CD4-positive, alpha-beta T cell (primary cell): ENCODE measurements at regions of chr11 and their contacts with region 1.

Region 1: GRCh38 chr11:118791111-118791965 is at the start of gene DDX6:
- DNase-seq: peak; percentile 87 to 95 (median 90)
- ATAC-seq: peak; percentile 61
- H3K4me3 ChIP-seq: peak within 1 kb of the TSS; percentile 94
- H3K4me3 Mint-ChIP-seq: peak within 1 kb of the TSS; percentile 96
- H3K27ac ChIP-seq: peak within 1 kb of the TSS; percentile 94 to 98
- H3K27ac Mint-ChIP-seq: peak within 1 kb of the TSS; percentile 95
- H3K4me1 ChIP-seq: peaks cover 36% of the 10 kb centered on the region
- H3K4me1 Mint-ChIP-seq: peaks cover 26% of the 10 kb centered on the region
- H3K27me3 ChIP-seq: no peaks in the 10 kb centered on the region
- H3K27me3 Mint-ChIP-seq: no peaks in the 10 kb centered on the region
- CTCF ChIP-seq: no peak
- total RNA-seq, gene DDX6: 341 to 355 TPM

Region 2: GRCh38 chr11:118610804-118611795 is 180.2 kb before region 1 on chr11:
- CTCF ChIA-PET with region 1: no interaction called
- POLR2A ChIA-PET with region 1: interaction called, 10 read pairs
- intact Hi-C with region 1: no loop called
- DNase-seq: peak; percentile 74 to 93 (median 82)
- ATAC-seq: peak; percentile 35
- H3K4me3 ChIP-seq: peak overlapping the region; percentile 47
- H3K4me3 Mint-ChIP-seq: peak overlapping the region; percentile 85
- H3K27ac ChIP-seq: no peak overlapping the region
- H3K27ac Mint-ChIP-seq: peak overlapping the region; percentile 43
- H3K4me1 ChIP-seq: peaks cover 44% of the 10 kb centered on the region
- H3K4me1 Mint-ChIP-seq: peaks cover 24% of the 10 kb centered on the region
- H3K27me3 ChIP-seq: peaks cover 0 to 9% of the 10 kb centered on the region in 2 experiments
- H3K27me3 Mint-ChIP-seq: peaks cover 25% of the 10 kb centered on the region
- CTCF ChIP-seq: peak; percentile 96

Region 3: DNA sequence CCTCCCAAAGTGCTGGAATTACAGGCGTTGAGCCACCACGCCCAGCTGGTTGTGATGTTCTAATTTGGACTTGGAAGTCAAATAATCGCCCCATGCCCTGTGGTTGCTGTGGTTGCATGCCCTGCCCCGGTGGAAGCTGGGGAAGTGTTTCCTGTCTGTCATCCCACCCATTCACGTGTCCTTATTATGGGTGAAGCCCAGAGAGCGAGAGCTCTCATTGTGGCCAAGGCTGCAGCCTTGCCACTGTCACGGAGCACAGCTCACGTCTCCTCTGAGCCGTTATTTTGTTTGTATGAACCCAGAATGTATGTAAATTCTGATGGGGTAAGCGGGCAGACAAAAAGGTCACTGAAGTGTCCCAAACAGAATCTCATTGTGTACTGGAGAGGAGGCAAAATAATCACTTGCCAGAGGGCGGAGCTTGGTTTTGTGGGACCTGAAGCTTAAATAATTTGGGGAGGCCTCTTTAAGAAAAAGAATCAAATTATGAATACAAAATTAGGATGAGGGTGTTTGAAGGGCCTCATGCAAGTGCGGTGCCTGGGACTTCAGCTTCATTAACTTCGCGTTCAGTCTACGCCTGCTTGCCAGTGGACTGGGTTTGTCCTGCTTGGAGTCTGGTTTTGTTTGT is 86.1 kb before region 1 on chr11:
- CTCF ChIA-PET with region 1: interaction called, 3 read pairs
- POLR2A ChIA-PET with region 1: interaction called, 50 read pairs
- intact Hi-C with region 1: no loop called
- DNase-seq: peak in 13 of 14 experiments; percentile 26 to 87 (median 45)
- ATAC-seq: peak; percentile 74
- H3K4me3 ChIP-seq: no peak overlapping the region
- H3K4me3 Mint-ChIP-seq: peak overlapping the region; percentile 84
- H3K27ac ChIP-seq: peak overlapping the region; percentile 14 to 60
- H3K27ac Mint-ChIP-seq: peak overlapping the region; percentile 92
- H3K4me1 ChIP-seq: peaks cover 42% of the 10 kb centered on the region
- H3K4me1 Mint-ChIP-seq: peaks cover 42% of the 10 kb centered on the region
- H3K27me3 ChIP-seq: no peaks in the 10 kb centered on the region
- H3K27me3 Mint-ChIP-seq: no peaks in the 10 kb centered on the region
- CTCF ChIP-seq: no peak

Region 4: GRCh38 chr11:118834427-118835028 is 43.2 kb after region 1 on chr11:
- CTCF ChIA-PET with region 1: no interaction called
- POLR2A ChIA-PET with region 1: interaction called, 10 read pairs
- intact Hi-C with region 1: no loop called
- DNase-seq: peak in 3 of 14 experiments; percentile 23 to 42 (median 24)
- ATAC-seq: no peak
- H3K4me3 ChIP-seq: peak overlapping the region; percentile 3
- H3K4me3 Mint-ChIP-seq: peak overlapping the region; percentile 27
- H3K27ac ChIP-seq: no peak overlapping the region
- H3K27ac Mint-ChIP-seq: no peak overlapping the region
- H3K4me1 ChIP-seq: peaks cover 6% of the 10 kb centered on the region
- H3K4me1 Mint-ChIP-seq: peaks cover 12% of the 10 kb centered on the region
- H3K27me3 ChIP-seq: no peaks in the 10 kb centered on the region
- H3K27me3 Mint-ChIP-seq: no peaks in the 10 kb centered on the region
- CTCF ChIP-seq: no peak

Region 5: GRCh38 chr11:118895142-118896039 is 104.1 kb after region 1 on chr11:
- CTCF ChIA-PET with region 1: interaction called, 5 read pairs
- POLR2A ChIA-PET with region 1: interaction called, 212 read pairs
- intact Hi-C with region 1: loop called (anchors 2 kb)
- DNase-seq: peak; percentile 59 to 91 (median 76)
- ATAC-seq: peak; percentile 75
- H3K4me3 ChIP-seq: peak overlapping the region; percentile 18
- H3K4me3 Mint-ChIP-seq: peak overlapping the region; percentile 70
- H3K27ac ChIP-seq: peak overlapping the region; percentile 77 to 89
- H3K27ac Mint-ChIP-seq: peak overlapping the region; percentile 97
- H3K4me1 ChIP-seq: peaks cover 94% of the 10 kb centered on the region
- H3K4me1 Mint-ChIP-seq: peaks cover 76% of the 10 kb centered on the region
- H3K27me3 ChIP-seq: no peaks in the 10 kb centered on the region
- H3K27me3 Mint-ChIP-seq: no peaks in the 10 kb centered on the region
- CTCF ChIP-seq: no peak

Region 6: GRCh38 chr11:118928108-118928870 is 137.0 kb after region 1 on chr11:
- CTCF ChIA-PET with region 1: interaction called, 8 read pairs
- POLR2A ChIA-PET with region 1: interaction called, 187 read pairs
- intact Hi-C with region 1: loop called in 1 of 2 experiments (anchors 2 kb)
- DNase-seq: peak; percentile 88 to 99 (median 92)
- ATAC-seq: peak; percentile 60
- H3K4me3 ChIP-seq: peak overlapping the region; percentile 93
- H3K4me3 Mint-ChIP-seq: peak overlapping the region; percentile 89
- H3K27ac ChIP-seq: peak overlapping the region; percentile 98 to 100
- H3K27ac Mint-ChIP-seq: peak overlapping the region; percentile 97
- H3K4me1 ChIP-seq: peaks cover 57% of the 10 kb centered on the region
- H3K4me1 Mint-ChIP-seq: peaks cover 55% of the 10 kb centered on the region
- H3K27me3 ChIP-seq: no peaks in the 10 kb centered on the region
- H3K27me3 Mint-ChIP-seq: peaks cover 5% of the 10 kb centered on the region
- CTCF ChIP-seq: peak; percentile 95